Activated CD4-positive, alpha-beta T cell treated with anti-CD3 and anti-CD28 coated beads, Interleukin-2, amount 10 ng/mL, durations not matched to agents 7 days and 5 days (primary cell): ENCODE measurements at regions of chr5 and their contacts with region 1.

Region 1: GRCh38 chr5:132767150-132767549 is 9.9 kb downstream of the SEPTIN8 start:
- DNase-seq: no peak
- H3K4me3 Mint-ChIP-seq: no peak overlapping the region
- H3K27ac Mint-ChIP-seq: no peak overlapping the region
- H3K4me1 Mint-ChIP-seq: no peaks in the 10 kb centered on the region
- H3K27me3 Mint-ChIP-seq: no peaks in the 10 kb centered on the region

Region 2: DNA sequence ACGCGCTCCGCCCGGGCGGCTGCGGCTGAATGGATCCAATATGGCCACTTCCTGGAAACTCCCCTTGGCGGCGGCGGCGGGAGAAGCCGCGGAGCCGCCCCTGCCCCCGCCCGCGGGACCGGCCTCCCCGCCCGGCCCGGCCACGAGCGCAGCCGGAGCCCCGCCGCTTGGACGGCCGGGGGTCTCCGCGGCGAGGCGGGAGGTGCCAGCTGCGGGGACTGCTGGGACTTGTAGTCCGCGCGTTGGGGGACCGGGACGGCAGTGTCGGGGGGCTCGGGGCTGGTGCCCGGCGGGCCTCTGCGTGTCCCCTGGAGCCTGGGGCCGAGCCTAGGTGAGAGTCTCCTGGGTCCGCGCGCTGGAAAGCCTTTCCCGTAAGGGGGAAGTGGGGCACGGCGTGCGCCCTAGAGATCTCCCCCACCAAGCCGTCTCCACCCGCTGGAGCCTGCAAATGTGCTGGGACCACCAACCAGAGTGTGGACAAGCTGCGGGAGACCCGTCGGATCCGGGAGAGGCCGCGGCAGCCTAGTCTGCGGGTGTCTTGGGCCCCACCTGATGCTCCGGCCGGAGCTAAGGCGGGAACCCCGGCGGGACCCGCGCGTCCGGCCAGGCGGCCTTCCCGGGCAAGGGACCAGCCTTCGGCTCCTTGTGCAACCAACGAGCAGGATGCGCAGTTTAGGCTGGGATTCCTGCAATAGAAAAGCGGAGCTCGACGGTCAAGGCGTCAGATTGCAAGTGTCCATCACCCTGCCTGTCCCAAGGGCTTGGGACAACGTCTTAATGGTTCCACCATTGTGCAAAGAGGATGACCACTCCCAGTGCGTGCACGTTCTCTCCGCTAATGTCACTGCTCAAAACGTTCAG is 10.3 kb after region 1 on chr5 and contains the start of gene SEPTIN8:
- CTCF ChIA-PET with region 1: interaction called, 13 read pairs
- POLR2A ChIA-PET with region 1: no interaction called
- DNase-seq: peak; percentile 41
- H3K4me3 Mint-ChIP-seq: peak within 1 kb of the TSS; percentile 68
- H3K27ac Mint-ChIP-seq: peak within 1 kb of the TSS; percentile 70
- H3K4me1 Mint-ChIP-seq: peaks cover 36% of the 10 kb centered on the region
- H3K27me3 Mint-ChIP-seq: peaks cover 49% of the 10 kb centered on the region
- total RNA-seq, gene SEPTIN8: 20.5 to 21.6 TPM